Activated T-helper 2 cell treated with anti-CD3 and anti-CD28 coated beads, Interferon-gamma antibody, Interleukin-2, Interleukin-4, amounts not matched to agents 10 μg/mL and 5 μg/mL and 100 μg/mL, durations not matched to agents 14 hours and 24 hours and 36 hours (primary cell): ENCODE measurements at regions of chr10 and their contacts with region 1.

Region 1: DNA sequence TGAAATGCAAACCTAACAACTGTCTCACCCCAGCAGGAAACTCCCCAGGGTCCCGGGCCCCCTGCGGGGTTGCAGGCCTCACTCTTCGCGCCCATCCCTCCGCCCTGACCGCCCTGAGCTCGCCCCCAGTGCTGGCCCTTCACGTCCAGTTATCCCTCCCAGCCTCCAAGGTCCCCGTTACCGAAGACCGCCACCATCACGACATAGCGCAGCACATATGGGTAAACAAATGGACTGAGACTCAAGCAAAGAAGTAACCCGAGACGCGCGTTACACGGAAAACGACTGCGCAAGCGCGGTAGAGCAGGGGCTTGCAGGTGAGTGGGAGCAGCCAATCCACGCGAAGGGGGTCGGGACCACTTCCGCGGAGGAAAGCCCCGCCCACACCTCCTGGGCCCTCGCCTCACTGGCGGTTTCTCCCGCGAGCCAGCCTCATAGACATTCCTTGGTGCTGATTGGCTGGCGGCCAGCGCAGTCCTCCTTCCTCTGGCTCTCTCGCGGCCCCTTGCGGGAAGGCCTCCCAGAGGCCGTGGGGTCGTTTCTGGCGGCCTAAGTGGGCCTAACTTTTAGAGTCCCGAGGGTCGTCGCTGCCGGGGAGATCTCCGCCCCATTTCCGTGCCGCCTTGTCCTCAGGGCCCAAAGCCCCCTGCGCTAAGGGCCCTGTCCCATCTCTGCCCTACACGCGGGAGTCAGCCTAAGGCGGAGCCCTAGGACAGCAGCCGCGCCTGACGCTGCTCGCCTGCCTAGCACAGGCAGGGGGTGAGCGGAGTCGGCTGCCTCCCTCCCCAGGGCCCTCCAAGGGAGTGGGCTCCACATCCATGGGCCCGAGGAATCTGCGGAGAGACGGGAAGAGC is 9.2 kb upstream of the FXYD4 start:
- DNase-seq: peak; percentile 97
- H3K4me3 Mint-ChIP-seq: peak overlapping the region; percentile 97
- H3K27ac Mint-ChIP-seq: peak overlapping the region; percentile 97
- H3K4me1 Mint-ChIP-seq: peaks cover 20% of the 10 kb centered on the region
- H3K27me3 Mint-ChIP-seq: no peaks in the 10 kb centered on the region

Region 2: DNA sequence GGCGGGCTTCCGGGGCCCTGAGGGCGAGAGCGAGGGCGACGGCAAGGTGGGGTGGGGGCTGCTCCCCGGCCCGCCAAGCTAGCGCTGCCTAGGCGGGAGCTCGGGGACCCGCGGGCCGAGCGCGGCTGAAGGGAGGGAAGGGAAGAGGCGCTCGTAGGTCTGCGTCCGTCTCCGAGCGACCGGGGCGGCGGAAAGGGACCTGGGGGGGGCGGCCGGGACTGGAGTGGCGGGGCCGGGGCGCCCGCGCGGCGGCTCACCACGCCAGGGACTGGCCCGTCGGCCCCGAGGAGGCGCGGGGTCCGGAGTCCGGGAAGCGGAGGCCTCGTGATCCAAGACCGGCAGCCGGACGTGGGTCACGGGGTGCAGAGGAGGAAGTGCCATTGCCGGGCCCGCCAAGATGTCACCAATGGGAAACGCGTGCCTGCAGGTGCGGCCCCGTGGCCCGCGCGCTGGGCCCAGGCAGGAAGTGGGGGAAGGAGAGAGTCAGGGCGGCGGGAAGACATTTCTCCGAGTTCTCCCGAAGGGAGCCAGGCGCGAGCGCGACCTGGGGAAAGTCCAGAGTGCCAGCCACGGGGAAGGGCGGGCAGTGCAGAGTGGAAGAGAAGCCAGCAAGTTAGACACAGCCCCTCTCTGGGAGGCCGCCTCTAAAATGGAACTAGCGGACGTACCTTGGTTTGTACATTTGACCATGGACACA is 34.9 kb after region 1 on chr10:
- intact Hi-C with region 1: loop called (anchors 1 kb)
- DNase-seq: peak; percentile 84
- H3K4me3 Mint-ChIP-seq: peak overlapping the region; percentile 86
- H3K27ac Mint-ChIP-seq: peak overlapping the region; percentile 93
- H3K4me1 Mint-ChIP-seq: peaks cover 62% of the 10 kb centered on the region
- H3K27me3 Mint-ChIP-seq: no peaks in the 10 kb centered on the region

Region 3: GRCh38 chr10:43502931-43503330 is 140.7 kb after region 1 on chr10:
- intact Hi-C with region 1: no loop called
- DNase-seq: no peak
- H3K4me3 Mint-ChIP-seq: no peak overlapping the region
- H3K27ac Mint-ChIP-seq: no peak overlapping the region
- H3K4me1 Mint-ChIP-seq: no peaks in the 10 kb centered on the region
- H3K27me3 Mint-ChIP-seq: no peaks in the 10 kb centered on the region